MCF 10A (cell line): ENCODE measurements at regions of chr11 and their contacts with region 1.

Region 1: GRCh38 chr11:8671193-8671612 is 11.3 kb downstream of the TRIM66 start:
- DNase-seq: peak; percentile 87
- H3K4me3 Mint-ChIP-seq: peak overlapping the region; percentile 21
- H3K27ac Mint-ChIP-seq: peak overlapping the region; percentile 91
- H3K4me1 Mint-ChIP-seq: peaks cover 15% of the 10 kb centered on the region
- H3K27me3 Mint-ChIP-seq: no peaks in the 10 kb centered on the region
- CTCF ChIP-seq: no peak

Region 2: GRCh38 chr11:8328848-8329330 is 342.3 kb before region 1 on chr11:
- CTCF ChIA-PET with region 1: no interaction called
- POLR2A ChIA-PET with region 1: no interaction called
- intact Hi-C with region 1: loop called (anchors 5 kb)
- DNase-seq: peak; percentile 96
- H3K4me3 Mint-ChIP-seq: peak overlapping the region; percentile 50
- H3K27ac Mint-ChIP-seq: no peak overlapping the region
- H3K4me1 Mint-ChIP-seq: peaks cover 16% of the 10 kb centered on the region
- H3K27me3 Mint-ChIP-seq: no peaks in the 10 kb centered on the region
- CTCF ChIP-seq: peak; percentile 78

Region 3: GRCh38 chr11:8604078-8604723 is 67.0 kb before region 1 on chr11:
- CTCF ChIA-PET with region 1: no interaction called
- POLR2A ChIA-PET with region 1: no interaction called
- intact Hi-C with region 1: loop called (anchors 1 kb)
- DNase-seq: peak; percentile 100
- H3K4me3 Mint-ChIP-seq: peak overlapping the region; percentile 15
- H3K27ac Mint-ChIP-seq: peak overlapping the region; percentile 95
- H3K4me1 Mint-ChIP-seq: peaks cover 25% of the 10 kb centered on the region
- H3K27me3 Mint-ChIP-seq: no peaks in the 10 kb centered on the region
- CTCF ChIP-seq: peak; percentile 64